ENCODE measurements at regions of chr10 and their contacts with region 1.

Region 1: DNA sequence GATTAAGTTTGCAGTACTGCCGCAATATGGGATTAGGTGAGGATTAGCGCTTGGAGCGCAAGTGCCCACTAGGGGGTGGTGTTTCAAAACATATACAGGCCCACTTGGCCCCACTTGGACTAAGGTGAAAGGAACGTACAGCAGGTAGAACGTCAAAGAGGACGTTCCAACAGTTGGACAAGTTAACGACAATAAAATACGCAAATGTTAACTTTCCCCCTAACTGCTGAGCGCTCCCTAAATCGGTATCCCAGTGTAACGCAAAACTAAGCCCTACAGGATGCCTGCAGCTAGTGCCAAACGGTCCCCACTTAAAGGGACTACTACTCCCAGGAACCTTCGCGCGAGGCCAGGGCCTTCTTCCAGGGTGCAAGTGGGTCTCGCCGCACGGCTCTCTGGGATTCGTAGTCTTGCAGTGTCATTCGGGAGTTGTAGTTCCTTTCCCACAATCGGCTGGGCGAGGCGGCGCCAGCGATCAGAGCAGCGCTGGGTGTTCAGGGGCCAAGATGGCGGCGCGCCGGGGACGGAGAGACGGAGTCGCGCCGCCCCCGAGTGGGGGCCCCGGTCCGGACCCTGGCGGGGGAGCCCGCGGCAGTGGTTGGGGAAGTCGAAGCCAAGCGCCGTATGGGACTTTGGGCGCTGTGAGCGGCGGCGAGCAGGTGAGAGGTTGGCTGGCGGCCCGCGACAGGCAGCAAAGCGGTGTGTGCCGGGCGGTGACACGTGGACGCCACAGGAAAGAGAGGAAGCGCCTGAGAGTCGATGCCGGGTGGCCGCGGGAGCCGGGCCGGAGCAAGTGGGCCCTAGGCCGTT is at the start of gene PPRC1:
- DNase-seq: peak; percentile 99
- H3K4me3 Mint-ChIP-seq: peak within 1 kb of the TSS; percentile 99
- H3K27ac Mint-ChIP-seq: peak within 1 kb of the TSS; percentile 99
- H3K4me1 Mint-ChIP-seq: peaks cover 42% of the 10 kb centered on the region
- H3K27me3 Mint-ChIP-seq: no peaks in the 10 kb centered on the region
- total RNA-seq, gene PPRC1: 47.7 to 49.4 TPM

Region 2: DNA sequence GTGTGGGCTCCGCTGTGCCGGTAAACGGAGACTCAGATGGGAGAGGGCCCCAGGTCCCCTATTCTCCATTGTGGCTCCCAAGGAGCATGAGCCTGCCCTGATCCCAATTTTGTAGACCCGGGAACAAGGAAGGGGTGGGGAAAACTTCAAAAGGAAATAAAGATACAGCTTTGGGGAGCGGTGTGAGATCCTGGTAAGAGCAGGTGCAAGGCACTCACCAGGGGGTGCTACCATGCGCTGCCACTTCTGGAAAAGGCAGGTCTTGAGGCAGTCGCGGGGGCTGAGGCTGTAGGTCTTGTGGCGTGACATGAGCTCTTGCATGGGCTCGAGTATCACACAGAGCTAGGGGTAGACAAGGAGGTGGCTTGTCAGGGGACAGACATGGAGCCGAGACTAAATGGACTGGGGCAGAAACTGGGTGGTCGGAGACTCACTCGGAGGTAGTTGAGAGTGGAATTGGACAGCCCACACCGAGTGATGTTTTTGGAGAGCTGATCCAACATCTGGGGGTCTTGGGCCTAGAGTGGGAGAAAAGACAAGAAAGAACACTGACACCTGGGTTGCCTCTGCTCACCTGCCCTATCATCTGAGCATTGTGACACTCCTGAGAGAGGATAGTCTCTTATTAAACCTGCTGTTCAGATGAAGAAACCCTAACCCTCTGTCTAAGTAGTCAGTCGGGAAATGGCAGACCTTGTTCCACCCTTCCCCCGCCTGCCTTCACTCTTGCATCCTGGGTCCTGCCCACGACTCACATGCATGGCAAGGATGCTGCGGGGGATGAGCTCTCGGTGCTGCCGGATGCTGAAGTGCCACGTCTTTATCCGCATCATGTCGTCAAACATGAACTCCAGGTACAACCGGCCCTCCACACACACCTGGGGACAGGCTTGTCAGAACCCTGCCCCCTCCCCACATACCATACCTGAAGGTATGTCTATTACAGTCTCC is 23.3 kb before region 1 on chr10:
- CTCF ChIA-PET with region 1: no interaction called
- POLR2A ChIA-PET with region 1: no interaction called
- DNase-seq: no peak
- H3K4me3 Mint-ChIP-seq: no peak overlapping the region
- H3K27ac Mint-ChIP-seq: peak overlapping the region; percentile 27
- H3K4me1 Mint-ChIP-seq: peaks cover 34% of the 10 kb centered on the region
- H3K27me3 Mint-ChIP-seq: no peaks in the 10 kb centered on the region

Region 3: GRCh38 chr10:102120991-102121753 is 11.6 kb before region 1 on chr10:
- CTCF ChIA-PET with region 1: interaction called, 14 read pairs
- POLR2A ChIA-PET with region 1: no interaction called
- DNase-seq: no peak
- H3K4me3 Mint-ChIP-seq: peak overlapping the region; percentile 81
- H3K27ac Mint-ChIP-seq: peak overlapping the region; percentile 91
- H3K4me1 Mint-ChIP-seq: peaks cover 45% of the 10 kb centered on the region
- H3K27me3 Mint-ChIP-seq: no peaks in the 10 kb centered on the region

Region 4: GRCh38 chr10:102151774-102152544 is 19.2 kb after region 1 on chr10 and contains the start of gene NOLC1:
- CTCF ChIA-PET with region 1: interaction called, 73 read pairs
- POLR2A ChIA-PET with region 1: interaction called, 3 read pairs
- DNase-seq: peak; percentile 100
- H3K4me3 Mint-ChIP-seq: peak within 1 kb of the TSS; percentile 99
- H3K27ac Mint-ChIP-seq: peak within 1 kb of the TSS; percentile 99
- H3K4me1 Mint-ChIP-seq: peaks cover 54% of the 10 kb centered on the region
- H3K27me3 Mint-ChIP-seq: no peaks in the 10 kb centered on the region
- total RNA-seq, gene NOLC1: 80.5 to 81.3 TPM